Aorta (tissue), 5 donors: ENCODE measurements at regions of chr14 and their contacts with region 1.

Region 1: DNA sequence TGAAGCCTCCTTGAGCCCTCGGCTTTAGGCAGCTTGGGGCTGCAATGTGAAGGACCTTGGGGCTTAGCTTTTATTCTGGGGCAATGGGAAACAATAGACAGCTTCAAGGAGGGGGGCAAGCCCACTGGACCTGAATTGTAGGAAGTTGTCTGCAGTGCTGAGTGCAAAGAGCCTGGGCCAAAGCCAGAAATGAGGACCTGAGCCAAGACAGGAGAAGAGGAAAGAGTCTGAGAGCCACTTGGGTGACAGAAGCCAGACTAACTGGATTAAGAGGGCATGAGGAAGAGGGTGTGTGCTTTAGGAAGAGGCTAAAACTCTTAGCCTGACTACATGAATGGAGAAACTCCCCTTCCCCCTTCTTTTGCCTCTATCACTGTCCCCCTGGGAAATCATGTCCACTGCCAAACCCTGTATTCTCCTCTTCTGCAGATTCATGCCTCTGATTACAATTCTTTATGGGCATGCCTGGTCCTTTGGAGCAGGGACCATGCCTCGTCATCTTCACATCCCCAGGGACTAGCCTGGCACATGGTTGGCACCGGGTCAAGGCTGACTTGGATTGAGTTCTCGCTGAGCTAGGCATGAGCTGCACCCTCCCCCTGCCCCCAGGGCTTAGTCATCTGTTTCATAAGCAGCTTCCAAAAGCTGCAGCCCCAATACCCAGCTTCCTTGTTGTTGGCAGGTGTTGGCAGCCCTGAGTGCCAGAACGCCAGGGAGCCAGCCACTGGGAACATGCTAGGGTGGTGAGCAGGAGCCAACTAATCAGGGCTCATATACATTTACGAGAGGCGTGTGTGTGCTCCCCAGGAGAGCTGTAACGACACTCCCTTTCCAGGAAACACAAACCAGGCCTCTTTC is 27.8 kb upstream of the JDP2 start:
- DNase-seq: peak; percentile 97
- ATAC-seq: peak; percentile 90
- H3K4me3 ChIP-seq: no peak overlapping the region
- H3K27ac ChIP-seq: peak overlapping the region in 1 of 2 donors; percentile 7
- H3K4me1 ChIP-seq: no peaks in the 10 kb centered on the region
- H3K27me3 ChIP-seq: no peaks in the 10 kb centered on the region

Region 2: GRCh38 chr14:75293920-75294642 is 106.0 kb before region 1 on chr14:
- intact Hi-C with region 1: no loop called
- DNase-seq: peak; percentile 97 to 98
- ATAC-seq: peak; percentile 95
- H3K4me3 ChIP-seq: peak overlapping the region; percentile 41 to 47
- H3K27ac ChIP-seq: peak overlapping the region; percentile 0 to 96
- H3K4me1 ChIP-seq: no peaks in the 10 kb centered on the region
- H3K27me3 ChIP-seq: no peaks in the 10 kb centered on the region

Region 3: DNA sequence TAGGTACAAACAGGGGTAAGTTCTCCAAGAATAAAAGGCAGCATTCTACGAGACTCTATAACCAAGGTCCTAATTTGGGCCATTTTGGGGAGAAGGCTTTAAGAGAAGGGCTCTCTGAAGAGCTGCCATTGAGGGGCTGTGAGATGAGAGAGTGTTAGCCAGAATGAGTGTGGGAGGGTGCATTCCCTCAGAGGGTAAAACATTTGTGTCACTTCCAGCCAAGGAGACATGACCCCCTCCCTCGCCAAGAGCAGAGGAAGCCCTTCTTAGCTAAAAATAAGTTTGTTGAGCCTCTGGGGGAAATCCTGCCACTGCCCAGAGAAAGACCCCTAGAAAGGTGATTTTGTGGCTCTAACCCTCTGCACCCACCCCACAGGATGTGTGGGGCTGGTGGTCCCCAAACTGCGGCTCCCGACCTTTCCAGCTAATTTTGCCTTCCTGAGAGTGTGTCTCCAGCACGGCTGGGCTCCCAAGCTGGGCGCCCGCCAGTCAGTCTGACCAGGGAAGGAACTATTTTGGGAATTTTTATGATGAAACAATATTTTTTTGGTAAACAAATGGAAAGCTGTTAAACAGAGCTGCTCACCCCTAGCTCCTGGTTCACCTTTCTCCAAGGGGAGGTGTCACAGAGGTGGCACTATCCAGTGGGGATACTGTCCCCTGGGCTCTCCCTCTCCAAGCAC is 38.2 kb before region 1 on chr14:
- intact Hi-C with region 1: loop called in 1 of 2 experiments (anchors 2 kb)
- DNase-seq: peak; percentile 67 to 84
- ATAC-seq: peak; percentile 71
- H3K4me3 ChIP-seq: no peak overlapping the region
- H3K27ac ChIP-seq: peak overlapping the region in 1 of 2 donors; percentile 41
- H3K4me1 ChIP-seq: no peaks in the 10 kb centered on the region
- H3K27me3 ChIP-seq: no peaks in the 10 kb centered on the region